Dorsolateral prefrontal cortex (tissue), 120 donors: ENCODE measurements at regions of chr13 and their contacts with region 1.

Region 1: GRCh38 chr13:41054919-41055619 is 6.2 kb upstream of the WBP4 start:
- DNase-seq: no peak
- H3K4me3 ChIP-seq: no peak overlapping the region
- H3K27ac ChIP-seq: peak overlapping the region in 6 of 59 donors; percentile 5 to 55 (median 22)
- H3K27me3 ChIP-seq: no peaks in the 10 kb centered on the region
- CTCF ChIP-seq: peak in 18 of 56 donors; percentile 6 to 44 (median 20)

Region 2: GRCh38 chr13:40789275-40790133 is 265.6 kb before region 1 on chr13 and contains the start of gene SLC25A15:
- intact Hi-C with region 1: loop called in 1 of 2 experiments (anchors 5 kb)
- DNase-seq: peak in 7 of 10 donors; percentile 34 to 76 (median 48)
- H3K4me3 ChIP-seq: peak within 1 kb of the TSS; percentile 57 to 89 (median 72)
- H3K27ac ChIP-seq: peak within 1 kb of the TSS in 46 of 59 donors; percentile 4 to 82 (median 56)
- H3K27me3 ChIP-seq: no peaks in the 10 kb centered on the region
- CTCF ChIP-seq: peak in 22 of 56 donors; percentile 3 to 57 (median 28)
- total RNA-seq, gene SLC25A15: 1.8 to 9.1 (median 4.0) TPM

Region 3: GRCh38 chr13:40982772-40983171 is 72.3 kb before region 1 on chr13:
- intact Hi-C with region 1: loop called (anchors 5 kb)
- DNase-seq: peak in 1 of 10 donors; percentile 23
- H3K4me3 ChIP-seq: peak overlapping the region in 54 of 59 donors; percentile 0 to 55 (median 24)
- H3K27ac ChIP-seq: peak overlapping the region in 58 of 59 donors; percentile 9 to 92 (median 81)
- H3K27me3 ChIP-seq: no peaks in the 10 kb centered on the region
- CTCF ChIP-seq: no peak

Region 4: DNA sequence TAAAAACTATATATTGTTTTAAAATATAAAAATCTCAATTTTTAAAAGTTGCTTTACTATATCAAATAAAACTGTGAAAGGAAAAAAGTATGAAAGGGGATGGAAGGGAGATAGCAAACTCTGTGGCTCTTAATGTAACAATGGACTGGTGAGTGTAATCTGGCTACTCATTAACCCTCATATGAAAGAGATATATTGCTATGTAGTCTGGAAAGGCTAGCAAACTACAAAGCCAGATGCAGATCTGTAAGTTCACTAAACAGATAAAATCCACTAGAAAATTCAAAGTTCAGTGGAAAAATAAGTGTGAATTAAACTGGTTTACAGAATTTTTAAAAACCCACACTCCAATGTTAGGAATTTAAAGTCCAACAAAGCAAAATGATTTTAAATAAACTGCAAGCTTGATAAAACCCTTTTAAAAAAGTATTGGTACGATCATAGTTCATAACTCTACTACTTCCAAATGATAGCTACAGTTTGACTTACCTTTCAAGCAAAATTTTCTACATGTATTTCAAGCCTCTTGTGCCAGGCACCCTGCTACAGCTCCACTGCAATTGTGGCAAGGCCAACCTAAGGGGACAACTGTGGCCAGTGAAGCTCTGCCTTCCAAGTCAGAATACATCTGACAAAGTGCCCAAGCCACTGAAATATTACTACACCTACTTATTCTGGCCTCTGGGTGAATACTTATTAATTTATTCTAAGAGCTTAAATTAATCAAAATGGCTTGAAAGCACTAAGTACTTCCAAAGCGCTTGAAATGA is 35.3 kb before region 1 on chr13:
- intact Hi-C with region 1: loop called in 1 of 2 experiments (anchors 5 kb)
- DNase-seq: no peak
- H3K4me3 ChIP-seq: peak overlapping the region in 6 of 59 donors; percentile 20 to 38 (median 27)
- H3K27ac ChIP-seq: peak overlapping the region in 46 of 59 donors; percentile 0 to 84 (median 71)
- H3K27me3 ChIP-seq: no peaks in the 10 kb centered on the region
- CTCF ChIP-seq: no peak